ENCODE measurements at regions of chr12 and their contacts with region 1.

Region 1: DNA sequence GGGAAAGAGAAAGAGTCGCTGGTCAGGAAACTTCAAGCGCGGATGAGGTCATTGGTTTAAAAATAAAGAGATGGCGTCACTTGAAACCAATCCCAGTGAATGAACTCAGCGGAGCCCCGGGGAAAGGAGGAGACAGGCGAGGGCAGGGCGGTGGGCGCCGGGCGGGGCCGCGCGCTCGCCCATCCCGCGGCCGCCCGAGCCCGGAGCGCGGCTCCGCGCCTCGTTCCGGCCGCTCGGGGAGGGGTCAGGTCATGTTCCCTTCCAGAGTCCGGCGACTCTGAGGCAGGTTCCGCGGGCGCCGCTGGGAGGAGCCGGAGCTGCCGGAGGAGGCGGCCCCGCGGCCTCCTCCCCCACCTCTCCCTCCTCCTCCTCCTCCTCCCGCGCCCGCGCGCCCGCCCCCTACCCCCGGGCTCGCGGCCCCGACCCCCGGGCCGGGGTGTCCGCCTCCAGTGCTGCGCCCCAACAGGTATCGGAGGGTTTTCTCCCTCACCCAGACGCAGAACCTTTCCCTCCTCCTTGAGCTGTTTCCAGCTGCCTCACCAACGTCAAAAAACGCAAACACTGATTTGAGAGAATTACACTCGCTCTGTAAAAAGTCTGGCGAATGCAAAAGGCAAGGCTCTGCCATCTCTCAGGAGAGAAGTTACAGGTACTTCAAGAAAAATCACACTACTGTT is at the start of gene DUSP16:
- DNase-seq: peak; percentile 93 to 96 (median 95)
- ATAC-seq: peak; percentile 92 to 98 (median 96)
- H3K4me3 ChIP-seq: peak within 1 kb of the TSS; percentile 50 to 95 (median 75)
- H3K27ac ChIP-seq: peak within 1 kb of the TSS; percentile 97 to 100 (median 99)
- H3K4me1 ChIP-seq: peaks cover 0 to 35% (median 31%) of the 10 kb centered on the region in 12 donors
- H3K27me3 ChIP-seq: no peaks in the 10 kb centered on the region
- CTCF ChIP-seq: peak in 7 of 12 donors; percentile 24 to 51 (median 32)
- POLR2A ChIP-seq: peak in 1 of 2 donors; percentile 81
- total RNA-seq, gene DUSP16: 9.7 to 24.7 (median 15.5) TPM

Region 2: DNA sequence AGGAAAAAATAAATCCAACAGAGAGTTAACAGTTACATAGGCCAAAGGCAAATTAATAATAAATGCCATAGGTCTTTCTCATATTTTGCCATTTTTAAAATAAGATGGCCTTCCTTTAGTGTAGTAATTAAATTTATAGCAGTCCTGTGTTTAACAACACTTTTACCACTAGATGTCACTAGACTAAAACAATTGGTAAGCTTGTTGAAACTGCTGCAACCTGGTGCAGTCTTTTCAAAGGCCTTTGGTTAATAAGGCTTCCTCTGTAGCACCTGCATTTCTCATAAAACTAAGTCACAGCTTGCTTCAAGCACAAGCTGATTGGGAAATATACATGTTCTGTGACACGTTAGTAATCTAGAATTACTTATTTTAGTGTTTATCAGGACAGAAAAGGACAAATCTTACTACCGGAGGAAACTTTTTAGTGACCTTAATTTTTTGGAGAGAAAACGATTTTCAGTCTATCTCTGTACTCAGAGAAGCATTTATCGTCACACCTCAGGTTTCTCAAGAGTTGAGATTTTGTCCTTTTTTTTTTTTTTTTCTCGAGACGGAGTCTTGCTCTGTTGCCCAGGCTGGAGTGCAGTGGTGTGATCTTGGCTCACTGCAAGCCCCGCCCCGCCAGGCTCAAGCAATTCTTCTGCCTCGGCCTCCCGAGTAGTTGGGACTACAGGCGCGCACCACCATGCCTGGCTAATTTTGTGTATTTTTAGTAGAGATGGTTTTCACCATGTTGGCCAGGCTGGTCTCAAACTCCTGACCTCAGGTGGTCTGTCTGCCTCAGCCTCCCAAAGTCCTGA is 185.9 kb before region 1 on chr12:
- intact Hi-C with region 1: loop called (anchors 1 to 5 kb)
- DNase-seq: no peak
- ATAC-seq: peak; percentile 63 to 83 (median 74)
- H3K4me3 ChIP-seq: no peak overlapping the region
- H3K27ac ChIP-seq: no peak overlapping the region
- H3K4me1 ChIP-seq: peaks cover 0 to 15% (median 9%) of the 10 kb centered on the region in 12 donors
- H3K27me3 ChIP-seq: no peaks in the 10 kb centered on the region
- CTCF ChIP-seq: peak; percentile 63 to 85 (median 76)
- POLR2A ChIP-seq: no peak

Region 3: DNA sequence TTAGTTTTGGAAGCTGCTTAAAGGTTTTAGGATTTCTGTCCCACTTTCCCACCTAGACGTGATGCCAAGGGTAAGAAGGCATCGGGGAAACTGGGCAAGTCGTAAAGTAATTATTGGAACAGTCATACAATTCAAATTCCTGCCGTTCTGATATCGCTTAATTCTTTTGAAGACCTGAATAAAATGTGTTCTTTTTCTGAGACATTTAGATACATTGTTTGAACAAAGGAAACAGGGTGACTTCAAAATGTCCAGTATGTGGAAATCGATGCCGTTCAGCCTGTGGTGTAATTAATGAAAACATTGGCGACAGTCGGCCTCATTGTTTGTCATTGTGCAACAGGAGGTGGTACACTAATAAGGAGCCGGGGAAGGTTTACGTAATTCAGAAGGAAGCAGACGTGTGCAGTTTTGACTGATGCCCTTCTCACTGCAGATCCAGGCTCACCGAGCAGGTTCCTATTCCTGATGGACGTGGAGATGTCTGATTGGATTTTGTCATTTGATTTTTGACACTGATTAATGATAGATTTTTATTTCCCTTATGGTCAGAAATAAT is 113.2 kb before region 1 on chr12:
- intact Hi-C with region 1: loop called in 2 of 10 experiments (anchors 2 to 5 kb)
- DNase-seq: no peak
- ATAC-seq: peak in 2 of 4 donors; percentile 59 to 74
- H3K4me3 ChIP-seq: no peak overlapping the region
- H3K27ac ChIP-seq: no peak overlapping the region
- H3K4me1 ChIP-seq: peaks cover 0 to 17% (median 0%) of the 10 kb centered on the region in 12 donors
- H3K27me3 ChIP-seq: no peaks in the 10 kb centered on the region
- CTCF ChIP-seq: no peak
- POLR2A ChIP-seq: no peak

Region 4: DNA sequence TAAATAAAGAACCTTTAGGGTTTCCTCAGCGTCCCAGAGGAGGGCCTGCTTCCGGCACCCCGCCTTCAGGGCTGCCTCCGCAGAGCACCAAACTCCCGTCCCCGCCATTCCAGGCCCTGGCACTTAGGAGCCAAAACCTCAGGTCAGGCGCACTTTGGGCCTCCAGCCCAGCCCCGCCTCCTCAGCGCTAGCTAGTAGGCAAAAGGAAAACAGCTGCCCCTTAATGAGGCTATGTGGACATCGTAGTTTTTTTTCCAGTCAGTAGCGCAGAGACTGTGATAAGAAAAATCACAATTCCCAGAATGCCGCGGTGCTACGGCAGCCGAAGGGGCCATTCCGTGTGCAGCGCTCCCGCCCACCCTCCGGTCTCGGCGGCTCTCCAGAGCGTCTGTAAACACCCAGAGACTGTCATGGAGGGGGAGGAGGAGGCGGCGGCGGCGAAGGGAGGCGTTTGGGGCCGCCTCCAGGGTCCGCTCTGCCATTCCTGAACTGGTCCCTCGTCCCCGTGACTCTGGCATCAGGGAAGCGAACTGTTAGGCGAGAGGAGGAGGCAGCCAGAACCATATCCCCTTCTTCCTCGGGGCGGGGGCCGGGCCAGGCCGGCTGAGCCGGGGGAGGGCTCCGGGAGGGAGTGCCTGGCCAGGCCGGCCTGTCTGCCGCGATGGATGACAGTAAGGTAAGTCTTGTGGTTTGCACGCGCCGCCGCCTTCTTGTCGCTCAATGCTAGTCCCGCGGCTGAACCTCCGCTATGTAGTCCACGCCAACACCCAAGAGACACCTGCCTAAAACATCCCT is 49.0 kb after region 1 on chr12 and contains the start of gene CREBL2:
- intact Hi-C with region 1: loop called in 5 of 10 experiments (anchors 2 to 5 kb)
- DNase-seq: peak; percentile 93 to 97 (median 94)
- ATAC-seq: peak; percentile 97
- H3K4me3 ChIP-seq: peak within 1 kb of the TSS; percentile 70 to 90 (median 79)
- H3K27ac ChIP-seq: peak within 1 kb of the TSS; percentile 86 to 98 (median 94)
- H3K4me1 ChIP-seq: peaks cover 0 to 65% (median 22%) of the 10 kb centered on the region in 12 donors
- H3K27me3 ChIP-seq: no peaks in the 10 kb centered on the region
- CTCF ChIP-seq: peak in 2 of 12 donors; percentile 18 to 21
- POLR2A ChIP-seq: peak in 1 of 2 donors; percentile 44
- total RNA-seq, gene CREBL2: 15.5 to 30.0 (median 19.9) TPM

Region 5: GRCh38 chr12:12704593-12705230 is 142.0 kb after region 1 on chr12:
- intact Hi-C with region 1: loop called in 5 of 10 experiments (anchors 5 to 10 kb)
- DNase-seq: peak in 4 of 5 donors; percentile 37 to 63 (median 56)
- ATAC-seq: peak; percentile 94 to 99 (median 99)
- H3K4me3 ChIP-seq: no peak overlapping the region
- H3K27ac ChIP-seq: no peak overlapping the region
- H3K4me1 ChIP-seq: peaks cover 0 to 20% (median under 1%) of the 10 kb centered on the region in 12 donors
- H3K27me3 ChIP-seq: no peaks in the 10 kb centered on the region
- CTCF ChIP-seq: peak; percentile 62 to 94 (median 84)
- POLR2A ChIP-seq: no peak

Region 6: DNA sequence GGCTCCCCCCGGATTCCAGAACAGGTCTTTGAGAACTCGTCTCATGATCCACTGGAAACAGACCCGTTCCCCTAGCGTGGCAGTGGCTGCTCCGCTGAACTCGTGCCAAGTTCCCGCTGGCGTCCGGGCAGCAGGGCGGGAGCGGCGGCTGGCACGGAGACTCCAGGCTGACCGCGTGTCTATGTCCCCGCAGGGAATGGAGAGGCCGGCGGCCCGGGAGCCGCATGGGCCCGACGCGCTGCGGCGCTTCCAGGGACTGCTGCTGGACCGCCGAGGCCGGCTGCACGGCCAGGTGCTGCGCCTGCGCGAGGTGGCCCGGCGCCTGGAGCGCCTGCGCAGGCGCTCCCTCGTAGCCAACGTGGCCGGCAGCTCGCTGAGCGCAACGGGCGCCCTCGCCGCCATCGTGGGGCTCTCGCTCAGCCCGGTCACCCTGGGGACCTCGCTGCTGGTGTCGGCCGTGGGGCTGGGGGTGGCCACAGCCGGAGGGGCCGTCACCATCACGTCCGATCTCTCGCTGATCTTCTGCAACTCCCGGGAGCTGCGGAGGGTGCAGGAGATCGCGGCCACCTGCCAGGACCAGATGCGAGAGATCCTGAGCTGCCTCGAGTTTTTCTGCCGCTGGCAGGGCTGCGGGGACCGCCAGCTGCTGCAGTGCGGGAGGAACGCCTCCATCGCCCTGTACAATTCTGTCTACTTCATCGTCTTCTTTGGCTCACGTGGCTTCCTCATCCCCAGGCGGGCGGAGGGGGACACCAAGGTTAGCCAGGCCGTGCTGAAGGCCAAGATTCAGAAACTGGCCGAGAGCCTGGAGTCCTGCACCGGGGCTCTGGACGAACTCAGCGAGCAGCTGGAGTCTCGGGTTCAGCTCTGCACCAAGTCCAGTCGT is 224.2 kb after region 1 on chr12:
- intact Hi-C with region 1: loop called in 1 of 10 experiments (anchors 5 kb)
- DNase-seq: peak; percentile 83 to 92 (median 89)
- ATAC-seq: peak; percentile 54 to 93 (median 73)
- H3K4me3 ChIP-seq: peak overlapping the region; percentile 8 to 85 (median 74)
- H3K27ac ChIP-seq: peak overlapping the region; percentile 72 to 99 (median 95)
- H3K4me1 ChIP-seq: peaks cover 0 to 58% (median 29%) of the 10 kb centered on the region in 12 donors
- H3K27me3 ChIP-seq: no peaks in the 10 kb centered on the region
- CTCF ChIP-seq: peak in 4 of 12 donors; percentile 6 to 21 (median 14)
- POLR2A ChIP-seq: peak in 1 of 2 donors; percentile 79

Region 7: DNA sequence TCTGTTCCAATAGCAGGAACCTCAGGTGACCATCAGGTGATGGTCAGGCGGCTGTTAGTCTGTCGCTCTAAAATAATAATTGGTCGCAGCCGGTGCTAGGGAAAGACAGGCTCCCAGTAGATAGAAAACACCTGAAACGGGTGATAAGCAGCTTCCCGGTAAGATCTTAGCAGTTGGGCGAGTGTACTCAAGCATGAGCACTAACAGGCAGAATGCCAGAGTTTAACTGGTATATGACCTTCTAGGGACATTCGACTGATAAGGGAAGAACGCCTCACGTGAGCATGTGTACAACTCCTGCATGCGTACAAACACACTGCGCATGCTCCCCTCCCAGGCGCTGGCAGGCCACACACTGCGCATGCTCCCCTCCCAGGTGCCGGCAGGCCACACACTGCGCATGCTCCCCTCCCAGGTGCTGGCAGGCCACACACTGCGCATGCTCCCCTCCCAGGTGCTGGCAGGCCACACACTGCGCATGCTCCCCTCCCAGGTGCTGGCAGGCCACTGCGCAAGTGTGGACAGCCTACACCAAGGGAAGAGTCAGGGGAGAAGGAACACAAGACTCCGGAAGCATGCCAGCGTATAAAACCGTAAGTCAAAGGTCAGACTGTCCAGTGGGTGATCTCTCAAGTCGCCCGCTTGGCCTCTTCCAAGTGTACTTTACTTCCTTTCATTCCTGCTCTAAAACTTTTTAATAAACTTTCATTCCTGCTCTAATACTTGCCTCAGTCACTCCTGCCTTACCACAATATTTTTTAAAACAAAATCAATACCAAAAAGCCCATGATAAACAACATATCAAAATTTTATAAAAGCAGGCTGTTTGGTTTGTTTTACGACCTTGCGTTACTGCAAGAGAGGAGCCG is 364.7 kb after region 1 on chr12:
- intact Hi-C with region 1: no loop called
- DNase-seq: peak; percentile 38 to 84 (median 60)
- ATAC-seq: peak; percentile 83 to 96 (median 92)
- H3K4me3 ChIP-seq: peak overlapping the region in 11 of 12 donors; percentile 9 to 49 (median 43)
- H3K27ac ChIP-seq: peak overlapping the region in 3 of 12 donors; percentile 27 to 49 (median 36)
- H3K4me1 ChIP-seq: peaks cover 0 to 4% (median 0%) of the 10 kb centered on the region in 12 donors
- H3K27me3 ChIP-seq: no peaks in the 10 kb centered on the region
- CTCF ChIP-seq: no peak
- POLR2A ChIP-seq: no peak